Transverse colon (tissue), 4 donors: ENCODE measurements at regions of chr15 and their contacts with region 1.

Region 1: GRCh38 chr15:55221090-55222011 is 24.6 kb upstream of the RSL24D1 start:
- DNase-seq: no peak
- H3K4me3 ChIP-seq: no peak overlapping the region
- H3K27ac ChIP-seq: peak overlapping the region; percentile 30 to 42 (median 40)
- H3K4me1 ChIP-seq: peaks cover 0 to 16% (median 0%) of the 10 kb centered on the region in 4 donors
- H3K27me3 ChIP-seq: no peaks in the 10 kb centered on the region
- CTCF ChIP-seq: no peak
- EP300 ChIP-seq: no peak
- POLR2A ChIP-seq: no peak

Region 2: GRCh38 chr15:54772663-54773062 is 448.7 kb before region 1 on chr15:
- in situ Hi-C with region 1: no loop called
- intact Hi-C with region 1: no loop called
- DNase-seq: no peak
- H3K4me3 ChIP-seq: no peak overlapping the region
- H3K27ac ChIP-seq: no peak overlapping the region
- H3K4me1 ChIP-seq: no peaks in the 10 kb centered on the region
- H3K27me3 ChIP-seq: no peaks in the 10 kb centered on the region
- CTCF ChIP-seq: no peak
- EP300 ChIP-seq: no peak
- POLR2A ChIP-seq: no peak

Region 3: GRCh38 chr15:55290528-55291057 is 69.2 kb after region 1 on chr15:
- in situ Hi-C with region 1: loop called (anchors 5 to 10 kb)
- intact Hi-C with region 1: no loop called
- DNase-seq: peak; percentile 88
- H3K4me3 ChIP-seq: peak overlapping the region; percentile 53 to 95 (median 71)
- H3K27ac ChIP-seq: peak overlapping the region; percentile 90 to 96 (median 92)
- H3K4me1 ChIP-seq: peaks cover 0 to 16% (median 10%) of the 10 kb centered on the region in 4 donors
- H3K27me3 ChIP-seq: no peaks in the 10 kb centered on the region
- CTCF ChIP-seq: peak; percentile 86 to 91 (median 88)
- EP300 ChIP-seq: no peak
- POLR2A ChIP-seq: no peak

Region 4: GRCh38 chr15:55407949-55408791 is 186.8 kb after region 1 on chr15 and contains the starts of genes CCPG1 and PIERCE2:
- in situ Hi-C with region 1: loop called in 2 of 4 experiments (anchors 25 kb)
- intact Hi-C with region 1: no loop called
- DNase-seq: peak; percentile 94
- H3K4me3 ChIP-seq: peak within 1 kb of the TSS; percentile 55 to 83 (median 74)
- H3K27ac ChIP-seq: peak within 1 kb of the TSS; percentile 89 to 95 (median 94)
- H3K4me1 ChIP-seq: peaks cover 5 to 44% (median 25%) of the 10 kb centered on the region in 4 donors
- H3K27me3 ChIP-seq: no peaks in the 10 kb centered on the region
- CTCF ChIP-seq: peak; percentile 89 to 98 (median 95)
- EP300 ChIP-seq: no peak
- POLR2A ChIP-seq: peak; percentile 91
- total RNA-seq, gene CCPG1: 8.6 to 69.5 (median 52.6) TPM
- total RNA-seq, gene PIERCE2: 3.5 to 14.9 (median 3.8) TPM in 3 of 4 donors, not detected in the other

Region 5: GRCh38 chr15:55434989-55435825 is 213.9 kb after region 1 on chr15:
- in situ Hi-C with region 1: loop called in 2 of 4 experiments (anchors 10 kb)
- intact Hi-C with region 1: no loop called
- DNase-seq: no peak
- H3K4me3 ChIP-seq: no peak overlapping the region
- H3K27ac ChIP-seq: no peak overlapping the region
- H3K4me1 ChIP-seq: no peaks in the 10 kb centered on the region
- H3K27me3 ChIP-seq: no peaks in the 10 kb centered on the region
- CTCF ChIP-seq: peak; percentile 35 to 55 (median 42)
- EP300 ChIP-seq: no peak
- POLR2A ChIP-seq: no peak